ENCODE measurements at regions of chr15 and their contacts with region 1.

Region 1: DNA sequence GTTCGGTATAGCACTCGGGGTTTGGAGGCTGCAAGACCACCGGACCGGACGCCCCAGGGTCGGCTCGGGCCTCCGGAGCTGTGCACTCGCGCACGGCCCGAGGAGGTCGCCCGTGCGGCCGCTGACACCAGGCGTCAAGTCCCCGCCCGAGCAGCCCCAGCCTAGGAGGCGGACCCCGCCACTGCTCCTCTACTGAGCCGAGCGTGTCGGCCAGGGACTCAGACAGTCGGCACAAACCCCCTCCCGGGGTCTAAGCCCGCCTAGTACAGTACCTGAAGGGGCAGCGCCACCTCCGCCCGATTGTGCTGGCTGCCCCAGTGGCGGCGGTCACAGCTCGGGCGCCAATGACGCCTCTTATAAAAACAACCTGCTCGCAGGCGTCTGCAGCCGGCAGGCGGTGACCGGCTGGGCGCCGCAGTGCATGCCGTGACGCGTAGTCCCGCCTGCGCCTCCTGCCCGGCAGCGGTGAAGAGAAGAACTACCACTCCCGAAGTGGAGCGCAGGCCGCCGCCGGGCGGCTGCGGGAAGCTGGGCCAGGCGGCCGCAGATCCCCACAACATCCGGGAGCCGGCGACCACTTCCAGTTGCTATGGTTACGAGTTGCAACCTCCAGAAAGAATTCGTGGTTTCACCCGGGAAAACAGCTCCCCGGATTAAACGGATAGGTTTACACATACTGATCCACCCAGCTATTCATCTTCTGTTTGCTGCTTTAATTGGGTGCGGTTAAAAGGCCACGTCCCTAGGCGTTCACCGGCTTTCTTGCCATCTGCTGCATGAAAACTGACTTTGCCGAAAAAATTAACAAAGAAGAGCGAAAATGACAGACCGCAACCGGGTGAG is at the starts of genes CCPG1 and PIERCE2:
- DNase-seq: peak; percentile 94 to 97
- ATAC-seq: peak; percentile 96 to 97
- H3K4me3 ChIP-seq: peak within 1 kb of the TSS; percentile 57
- H3K27ac ChIP-seq: peak within 1 kb of the TSS; percentile 75 to 88
- H3K4me1 ChIP-seq: peaks cover 31% of the 10 kb centered on the region
- CTCF ChIP-seq: no peak; the same call in none of the 3 replicates
- EP300 ChIP-seq: no peak
- POLR2A ChIP-seq: peak; percentile 57
- RAD21 ChIP-seq: peak in 1 of 2 experiments; percentile 52; a peak in 3 of 5 replicates
- polyA plus RNA-seq, gene CCPG1: 173 and 176 TPM in 2 replicates
- polyA plus RNA-seq, gene PIERCE2: 13.4 and 14.8 TPM in 2 replicates

Region 2: DNA sequence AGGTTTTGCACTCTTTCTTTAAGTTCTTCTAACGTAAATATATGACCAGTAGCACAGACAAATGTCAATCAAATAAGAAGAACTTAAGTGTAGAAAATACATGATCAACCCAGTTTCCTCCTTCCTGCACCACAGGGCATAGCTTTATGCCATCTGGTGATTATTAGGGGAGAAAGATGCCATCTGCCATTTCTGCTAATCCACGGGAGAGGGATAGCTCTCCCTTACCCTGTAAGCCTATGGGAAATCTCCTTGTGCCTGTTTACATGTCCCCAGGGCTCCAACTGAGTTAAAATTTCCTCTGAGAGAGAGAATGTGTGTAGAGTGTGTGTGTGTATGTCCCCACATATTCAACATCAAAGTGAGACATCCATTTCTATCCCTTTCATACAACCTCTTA is 347.3 kb before region 1 on chr15:
- CTCF ChIA-PET with region 1: no interaction called
- POLR2A ChIA-PET with region 1: no interaction called
- DNase-seq: no peak
- ATAC-seq: no peak
- H3K4me3 ChIP-seq: no peak overlapping the region
- H3K27ac ChIP-seq: no peak overlapping the region
- H3K4me1 ChIP-seq: no peaks in the 10 kb centered on the region
- CTCF ChIP-seq: no peak
- EP300 ChIP-seq: no peak
- POLR2A ChIP-seq: no peak
- RAD21 ChIP-seq: no peak

Region 3: GRCh38 chr15:55318588-55319494 is 89.3 kb before region 1 on chr15 and contains the starts of genes PIGB and PIGBOS1:
- CTCF ChIA-PET with region 1: interaction called, 9 read pairs
- POLR2A ChIA-PET with region 1: interaction called, 42 read pairs
- DNase-seq: peak; percentile 84 to 96
- ATAC-seq: peak; percentile 99
- H3K4me3 ChIP-seq: peak within 1 kb of the TSS; percentile 62
- H3K27ac ChIP-seq: peak within 1 kb of the TSS; percentile 85 to 90
- H3K4me1 ChIP-seq: peaks cover 21% of the 10 kb centered on the region
- CTCF ChIP-seq: no peak
- EP300 ChIP-seq: no peak
- POLR2A ChIP-seq: peak; percentile 81
- RAD21 ChIP-seq: 0 out of 5 replicates have a peak, but pooled peaks have one; percentile 10 to 26
- polyA plus RNA-seq, gene PIGB: 43.3 and 43.4 TPM in 2 replicates
- polyA plus RNA-seq, gene PIGBOS1: 26.5 and 42.3 TPM in 2 replicates

Region 4: GRCh38 chr15:55344206-55344605 is 64.0 kb before region 1 on chr15:
- CTCF ChIA-PET with region 1: interaction called, 10 read pairs
- POLR2A ChIA-PET with region 1: no interaction called
- DNase-seq: no peak
- ATAC-seq: peak in 1 of 2 experiments; percentile 39; a peak in 1 of 6 replicates
- H3K4me3 ChIP-seq: no peak overlapping the region
- H3K27ac ChIP-seq: no peak overlapping the region
- H3K4me1 ChIP-seq: no peaks in the 10 kb centered on the region
- CTCF ChIP-seq: no peak
- EP300 ChIP-seq: no peak
- POLR2A ChIP-seq: no peak
- RAD21 ChIP-seq: no peak

Region 5: DNA sequence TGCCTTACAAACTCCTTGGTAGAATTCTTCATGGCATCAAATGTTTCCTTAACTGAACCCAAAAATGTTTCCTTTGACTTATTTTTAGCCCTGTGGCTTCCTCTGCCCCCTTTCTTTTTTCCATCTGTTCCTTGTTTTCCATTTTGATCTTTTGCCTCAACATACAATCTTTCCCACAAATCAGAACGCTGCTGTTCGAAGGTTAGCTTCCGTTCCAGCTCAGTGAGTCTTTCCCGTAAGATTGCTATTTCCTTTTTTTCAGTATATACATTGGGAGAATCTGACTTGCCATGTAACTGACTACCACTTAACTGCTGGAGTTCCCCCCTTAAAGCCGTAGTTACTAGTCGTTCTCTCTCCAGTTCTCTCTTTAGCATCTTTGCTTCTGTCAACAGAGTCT is 47.9 kb before region 1 on chr15:
- CTCF ChIA-PET with region 1: interaction called, 10 read pairs
- POLR2A ChIA-PET with region 1: interaction called, 3 read pairs
- DNase-seq: no peak
- ATAC-seq: no peak
- H3K4me3 ChIP-seq: no peak overlapping the region
- H3K27ac ChIP-seq: no peak overlapping the region
- H3K4me1 ChIP-seq: peaks cover 13% of the 10 kb centered on the region; the same call in 2 of the 3 replicates
- CTCF ChIP-seq: no peak
- EP300 ChIP-seq: no peak
- POLR2A ChIP-seq: no peak
- RAD21 ChIP-seq: no peak

Region 6: GRCh38 chr15:55383687-55384086 is 24.5 kb before region 1 on chr15:
- CTCF ChIA-PET with region 1: interaction called, 12 read pairs
- POLR2A ChIA-PET with region 1: interaction called, 5 read pairs
- DNase-seq: no peak
- ATAC-seq: no peak
- H3K4me3 ChIP-seq: no peak overlapping the region
- H3K27ac ChIP-seq: no peak overlapping the region
- H3K4me1 ChIP-seq: peaks cover 4% of the 10 kb centered on the region; the same call in 2 of the 3 replicates
- CTCF ChIP-seq: no peak
- EP300 ChIP-seq: no peak
- POLR2A ChIP-seq: no peak
- RAD21 ChIP-seq: no peak

Region 7: DNA sequence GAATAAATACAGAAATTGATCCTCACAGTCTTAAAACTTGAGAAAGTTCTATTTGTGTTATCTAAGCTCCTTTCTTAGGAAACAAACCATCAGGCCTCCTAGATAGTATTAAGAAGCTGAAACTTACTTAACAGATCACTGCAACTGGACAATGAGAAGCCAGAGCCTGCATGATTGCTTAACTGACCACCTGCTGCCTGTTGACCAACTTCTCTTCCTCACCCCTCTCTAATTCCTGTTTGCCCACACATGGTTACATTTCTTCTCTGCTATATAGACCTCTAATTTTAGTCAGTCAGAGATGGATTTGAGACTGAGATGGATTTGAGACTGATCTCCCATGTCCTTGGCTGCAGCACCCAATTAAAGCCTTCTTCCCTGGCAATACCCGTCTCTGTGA is 13.5 kb before region 1 on chr15:
- CTCF ChIA-PET with region 1: interaction called, 50 read pairs
- POLR2A ChIA-PET with region 1: interaction called, 6 read pairs
- DNase-seq: no peak
- ATAC-seq: no peak
- H3K4me3 ChIP-seq: no peak overlapping the region
- H3K27ac ChIP-seq: no peak overlapping the region
- H3K4me1 ChIP-seq: peaks cover under 1% of the 10 kb centered on the region; the same call in 1 of the 3 replicates
- CTCF ChIP-seq: no peak
- EP300 ChIP-seq: no peak
- POLR2A ChIP-seq: no peak
- RAD21 ChIP-seq: no peak

Region 8: DNA sequence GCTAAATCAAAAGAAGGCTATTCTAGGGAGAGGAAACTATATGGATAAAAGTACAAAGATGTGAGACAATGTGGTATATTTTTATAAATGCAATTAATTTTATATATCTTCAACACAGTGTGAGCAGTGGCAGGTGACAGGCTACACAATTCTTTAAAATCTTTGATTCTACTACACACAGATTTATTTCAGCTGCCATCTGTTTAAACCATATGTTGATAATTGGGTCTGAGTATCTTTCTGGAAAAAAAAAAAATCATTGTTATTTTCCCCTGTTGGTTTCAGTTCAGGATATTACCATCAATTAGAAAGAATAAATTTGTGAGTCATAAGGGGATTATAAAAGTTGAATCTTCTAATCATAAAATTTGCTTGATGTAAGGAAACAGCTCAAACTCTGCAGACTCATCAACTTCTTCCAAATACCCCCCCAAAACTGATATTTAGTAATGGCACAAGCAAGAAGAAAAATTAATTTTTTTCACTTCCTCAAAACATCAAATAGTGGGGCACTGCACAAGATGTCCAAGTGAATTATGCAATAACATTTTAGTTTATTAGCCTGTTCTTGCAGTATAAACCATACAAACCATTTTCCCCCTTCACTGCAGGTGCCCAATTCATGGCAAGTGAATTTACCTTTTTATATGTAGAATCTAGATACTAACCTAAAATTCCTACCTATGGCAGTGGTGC is 12.1 kb after region 1 on chr15:
- CTCF ChIA-PET with region 1: interaction called, 11 read pairs
- POLR2A ChIA-PET with region 1: interaction called, 3 read pairs
- DNase-seq: no peak
- ATAC-seq: no peak
- H3K4me3 ChIP-seq: no peak overlapping the region
- H3K27ac ChIP-seq: no peak overlapping the region
- H3K4me1 ChIP-seq: no peaks in the 10 kb centered on the region
- CTCF ChIP-seq: no peak
- EP300 ChIP-seq: no peak
- POLR2A ChIP-seq: no peak
- RAD21 ChIP-seq: no peak

Region 9: GRCh38 chr15:55475842-55476241 is 67.7 kb after region 1 on chr15:
- CTCF ChIA-PET with region 1: no interaction called
- POLR2A ChIA-PET with region 1: no interaction called
- DNase-seq: no peak
- ATAC-seq: no peak
- H3K4me3 ChIP-seq: no peak overlapping the region
- H3K27ac ChIP-seq: no peak overlapping the region
- H3K4me1 ChIP-seq: no peaks in the 10 kb centered on the region
- CTCF ChIP-seq: no peak
- EP300 ChIP-seq: no peak
- POLR2A ChIP-seq: no peak
- RAD21 ChIP-seq: no peak

Measured in A549 (cell line).